ENCODE measurements at regions of chr2 and their contacts with region 1.

Region 1: GRCh38 chr2:157336137-157337010 is 10.8 kb upstream of the ERMN start:
- DNase-seq: peak; percentile 36
- H3K4me3 Mint-ChIP-seq: no peak overlapping the region
- H3K27ac Mint-ChIP-seq: no peak overlapping the region
- H3K4me1 Mint-ChIP-seq: peaks cover 39% of the 10 kb centered on the region
- H3K27me3 Mint-ChIP-seq: no peaks in the 10 kb centered on the region

Region 2: DNA sequence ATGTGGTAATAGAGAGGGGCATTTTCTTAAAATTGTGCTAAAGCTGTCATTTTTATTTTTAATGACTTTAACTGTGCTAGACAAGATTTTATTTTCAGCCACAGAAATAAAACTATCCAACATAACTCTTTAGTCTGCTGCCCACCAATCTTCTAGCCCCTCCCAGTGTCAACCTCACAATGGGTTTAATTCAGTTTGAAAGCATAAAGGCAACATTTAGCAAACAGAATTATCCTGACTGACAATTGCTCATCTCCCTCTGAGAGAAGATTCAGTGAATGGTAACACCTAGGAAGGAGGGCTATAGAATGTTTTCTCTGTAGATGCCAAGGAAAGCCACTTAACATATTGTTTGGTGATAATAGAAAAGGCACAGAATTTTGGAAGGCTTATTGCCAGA is 16.0 kb before region 1 on chr2:
- CTCF ChIA-PET with region 1: interaction called, 98 read pairs
- POLR2A ChIA-PET with region 1: no interaction called
- DNase-seq: no peak
- H3K4me3 Mint-ChIP-seq: no peak overlapping the region
- H3K27ac Mint-ChIP-seq: no peak overlapping the region
- H3K4me1 Mint-ChIP-seq: peaks cover 2% of the 10 kb centered on the region
- H3K27me3 Mint-ChIP-seq: no peaks in the 10 kb centered on the region

Region 3: GRCh38 chr2:157349949-157350515 is 13.7 kb after region 1 on chr2:
- CTCF ChIA-PET with region 1: interaction called, 28 read pairs
- POLR2A ChIA-PET with region 1: interaction called, 7 read pairs
- DNase-seq: no peak
- H3K4me3 Mint-ChIP-seq: no peak overlapping the region
- H3K27ac Mint-ChIP-seq: no peak overlapping the region
- H3K4me1 Mint-ChIP-seq: no peaks in the 10 kb centered on the region
- H3K27me3 Mint-ChIP-seq: no peaks in the 10 kb centered on the region

Region 4: GRCh38 chr2:157375384-157375783 is 39.0 kb after region 1 on chr2:
- CTCF ChIA-PET with region 1: no interaction called
- POLR2A ChIA-PET with region 1: no interaction called
- DNase-seq: no peak
- H3K4me3 Mint-ChIP-seq: no peak overlapping the region
- H3K27ac Mint-ChIP-seq: no peak overlapping the region
- H3K4me1 Mint-ChIP-seq: no peaks in the 10 kb centered on the region
- H3K27me3 Mint-ChIP-seq: no peaks in the 10 kb centered on the region

Region 5: GRCh38 chr2:157404363-157404762 is 68.0 kb after region 1 on chr2:
- CTCF ChIA-PET with region 1: interaction called, 14 read pairs
- POLR2A ChIA-PET with region 1: interaction called, 15 read pairs
- DNase-seq: peak; percentile 67
- H3K4me3 Mint-ChIP-seq: peak overlapping the region; percentile 50
- H3K27ac Mint-ChIP-seq: peak overlapping the region; percentile 87
- H3K4me1 Mint-ChIP-seq: peaks cover 64% of the 10 kb centered on the region
- H3K27me3 Mint-ChIP-seq: no peaks in the 10 kb centered on the region

Measured in activated CD4-positive, alpha-beta memory T cell treated with anti-CD3 and anti-CD28 coated beads, Interleukin-2, amount 10 ng/mL, durations not matched to agents 7 days and 5 days (primary cell).